Astrocyte of the cerebellum (primary cell): ENCODE measurements at regions of chr7 and their contacts with region 1.

Region 1: DNA sequence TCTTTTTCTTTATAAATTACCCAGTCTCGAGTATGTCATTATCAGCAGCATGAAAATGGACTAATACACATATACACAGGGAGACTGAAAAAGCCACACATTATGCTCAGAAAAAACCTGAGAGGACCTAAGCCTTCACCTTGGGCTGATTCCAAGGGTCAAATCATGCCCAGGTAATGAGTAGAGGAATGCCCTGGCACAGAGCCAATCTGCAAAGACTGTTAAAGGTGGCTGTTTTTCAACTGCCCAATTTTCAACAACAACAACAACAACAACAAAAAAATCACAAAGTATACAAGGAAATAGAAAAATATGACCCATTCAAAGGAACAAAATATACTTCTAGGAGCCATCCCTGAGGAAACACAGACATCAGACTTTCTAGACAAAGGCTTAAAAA is 220.2 kb upstream of the TBX20 start:
- DNase-seq: no peak
- H3K4me3 ChIP-seq: no peak overlapping the region
- CTCF ChIP-seq: no peak

Region 2: GRCh38 chr7:35508623-35509400 is 34.7 kb after region 1 on chr7:
- in situ Hi-C with region 1: loop called (anchors 5 kb)
- DNase-seq: no peak
- H3K4me3 ChIP-seq: no peak overlapping the region
- CTCF ChIP-seq: no peak

Region 3: GRCh38 chr7:36010656-36011587 is 536.8 kb after region 1 on chr7:
- in situ Hi-C with region 1: no loop called
- DNase-seq: no peak
- H3K4me3 ChIP-seq: no peak overlapping the region
- CTCF ChIP-seq: no peak